Activated naive CD4-positive, alpha-beta T cell treated with anti-CD3 and anti-CD28 coated beads, Interleukin-2, amount 10 ng/mL, durations not matched to agents 7 days and 5 days (primary cell): ENCODE measurements at regions of chr7 and their contacts with region 1.

Region 1: GRCh38 chr7:47991741-47992311 is 12.4 kb upstream of the HUS1 start:
- DNase-seq: peak; percentile 94
- H3K4me3 Mint-ChIP-seq: peak overlapping the region; percentile 79
- H3K27ac Mint-ChIP-seq: peak overlapping the region; percentile 91
- H3K4me1 Mint-ChIP-seq: peaks cover 23% of the 10 kb centered on the region
- H3K27me3 Mint-ChIP-seq: no peaks in the 10 kb centered on the region

Region 2: GRCh38 chr7:47937065-47937683 is 54.7 kb before region 1 on chr7:
- CTCF ChIA-PET with region 1: no interaction called
- DNase-seq: peak; percentile 24
- H3K4me3 Mint-ChIP-seq: no peak overlapping the region
- H3K27ac Mint-ChIP-seq: no peak overlapping the region
- H3K4me1 Mint-ChIP-seq: peaks cover 17% of the 10 kb centered on the region
- H3K27me3 Mint-ChIP-seq: no peaks in the 10 kb centered on the region

Region 3: GRCh38 chr7:47979145-47979831 is 12.5 kb before region 1 on chr7 and contains the start of gene HUS1:
- CTCF ChIA-PET with region 1: interaction called, 10 read pairs
- DNase-seq: peak; percentile 97
- H3K4me3 Mint-ChIP-seq: peak within 1 kb of the TSS; percentile 90
- H3K27ac Mint-ChIP-seq: peak within 1 kb of the TSS; percentile 96
- H3K4me1 Mint-ChIP-seq: peaks cover 25% of the 10 kb centered on the region
- H3K27me3 Mint-ChIP-seq: no peaks in the 10 kb centered on the region

Region 4: GRCh38 chr7:48004638-48005037 is 12.8 kb after region 1 on chr7:
- CTCF ChIA-PET with region 1: no interaction called
- DNase-seq: no peak
- H3K4me3 Mint-ChIP-seq: no peak overlapping the region
- H3K27ac Mint-ChIP-seq: no peak overlapping the region
- H3K4me1 Mint-ChIP-seq: no peaks in the 10 kb centered on the region
- H3K27me3 Mint-ChIP-seq: peaks cover 9% of the 10 kb centered on the region

Region 5: DNA sequence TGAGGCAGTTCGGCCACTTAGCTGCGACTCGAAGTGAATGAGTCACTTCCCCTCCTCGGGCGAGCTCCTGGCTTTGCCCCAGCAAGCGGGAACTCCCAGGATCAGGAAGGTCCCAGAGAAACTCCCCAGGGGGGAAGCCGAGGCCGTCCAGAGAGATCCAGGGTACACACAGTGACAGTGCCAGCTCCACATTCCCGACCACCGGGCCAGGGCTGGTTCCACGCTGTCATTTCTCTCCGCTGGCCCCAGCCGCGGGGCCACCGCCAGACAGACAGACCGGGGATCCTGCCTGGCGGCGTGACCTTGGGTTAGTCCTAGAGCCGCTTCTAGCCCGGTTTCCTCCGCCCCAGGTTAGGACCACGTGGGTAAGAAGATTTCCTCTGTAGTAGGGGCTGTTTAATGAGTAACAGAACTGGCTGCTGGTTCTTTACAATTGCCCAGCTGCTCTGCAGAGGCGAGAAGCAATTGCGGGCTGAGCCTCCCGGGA is 96.8 kb after region 1 on chr7:
- CTCF ChIA-PET with region 1: interaction called, 22 read pairs
- DNase-seq: no peak
- H3K4me3 Mint-ChIP-seq: peak overlapping the region; percentile 93
- H3K27ac Mint-ChIP-seq: peak overlapping the region; percentile 97
- H3K4me1 Mint-ChIP-seq: peaks cover 76% of the 10 kb centered on the region
- H3K27me3 Mint-ChIP-seq: no peaks in the 10 kb centered on the region

Region 6: GRCh38 chr7:48094751-48095562 is 103.1 kb after region 1 on chr7:
- CTCF ChIA-PET with region 1: interaction called, 14 read pairs
- DNase-seq: no peak
- H3K4me3 Mint-ChIP-seq: peak overlapping the region; percentile 40
- H3K27ac Mint-ChIP-seq: peak overlapping the region; percentile 97
- H3K4me1 Mint-ChIP-seq: peaks cover 95% of the 10 kb centered on the region
- H3K27me3 Mint-ChIP-seq: no peaks in the 10 kb centered on the region

Region 7: DNA sequence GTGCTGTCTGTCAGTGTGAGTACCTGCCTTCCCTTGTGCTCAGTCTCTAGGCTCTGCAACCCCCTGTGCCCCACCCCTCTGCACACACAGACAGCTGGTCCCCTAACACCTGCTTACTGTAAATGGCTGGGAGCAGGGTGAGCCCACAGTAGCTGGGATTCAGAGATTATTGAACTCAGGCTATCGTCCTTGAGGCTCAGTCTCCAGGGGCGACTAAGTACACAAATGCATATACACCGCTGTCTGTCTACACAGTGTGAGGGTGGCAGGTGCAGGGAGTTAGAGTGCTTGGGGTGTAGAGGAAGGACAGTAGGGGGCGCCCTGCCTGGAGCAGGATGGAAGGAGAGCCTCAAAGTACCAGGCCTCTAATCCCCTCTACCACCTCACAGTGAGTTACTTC is 110.1 kb after region 1 on chr7:
- CTCF ChIA-PET with region 1: interaction called, 84 read pairs
- DNase-seq: peak; percentile 47
- H3K4me3 Mint-ChIP-seq: no peak overlapping the region
- H3K27ac Mint-ChIP-seq: peak overlapping the region; percentile 77
- H3K4me1 Mint-ChIP-seq: peaks cover 51% of the 10 kb centered on the region
- H3K27me3 Mint-ChIP-seq: no peaks in the 10 kb centered on the region

Region 8: GRCh38 chr7:48109848-48110663 is 118.2 kb after region 1 on chr7:
- CTCF ChIA-PET with region 1: interaction called, 84 read pairs
- DNase-seq: peak; percentile 94
- H3K4me3 Mint-ChIP-seq: no peak overlapping the region
- H3K27ac Mint-ChIP-seq: peak overlapping the region; percentile 74
- H3K4me1 Mint-ChIP-seq: peaks cover 21% of the 10 kb centered on the region
- H3K27me3 Mint-ChIP-seq: no peaks in the 10 kb centered on the region

Region 9: DNA sequence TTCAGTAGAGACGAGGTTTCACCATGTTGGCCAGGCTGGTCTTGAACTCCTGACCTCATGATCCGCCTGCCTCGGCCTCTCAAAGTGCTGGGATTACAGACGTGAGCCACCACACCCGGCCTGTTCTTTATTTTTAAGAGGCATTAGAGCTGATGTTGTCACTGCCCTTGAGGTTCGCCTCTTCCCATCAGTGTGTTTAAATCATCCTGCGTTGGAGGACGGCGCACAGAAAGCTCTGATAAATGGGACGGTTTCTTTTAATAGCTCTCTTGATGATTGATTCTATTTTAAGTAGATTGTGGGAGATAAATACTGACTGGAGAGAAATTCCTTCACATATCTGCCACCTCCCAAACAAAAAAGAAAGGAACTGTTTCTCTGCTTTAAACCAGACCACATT is 126.2 kb after region 1 on chr7:
- CTCF ChIA-PET with region 1: interaction called, 11 read pairs
- DNase-seq: no peak
- H3K4me3 Mint-ChIP-seq: no peak overlapping the region
- H3K27ac Mint-ChIP-seq: no peak overlapping the region
- H3K4me1 Mint-ChIP-seq: no peaks in the 10 kb centered on the region
- H3K27me3 Mint-ChIP-seq: peaks cover 4% of the 10 kb centered on the region